Mammary epithelial cell (primary cell): ENCODE measurements at regions of chr6 and their contacts with region 1.

Region 1: DNA sequence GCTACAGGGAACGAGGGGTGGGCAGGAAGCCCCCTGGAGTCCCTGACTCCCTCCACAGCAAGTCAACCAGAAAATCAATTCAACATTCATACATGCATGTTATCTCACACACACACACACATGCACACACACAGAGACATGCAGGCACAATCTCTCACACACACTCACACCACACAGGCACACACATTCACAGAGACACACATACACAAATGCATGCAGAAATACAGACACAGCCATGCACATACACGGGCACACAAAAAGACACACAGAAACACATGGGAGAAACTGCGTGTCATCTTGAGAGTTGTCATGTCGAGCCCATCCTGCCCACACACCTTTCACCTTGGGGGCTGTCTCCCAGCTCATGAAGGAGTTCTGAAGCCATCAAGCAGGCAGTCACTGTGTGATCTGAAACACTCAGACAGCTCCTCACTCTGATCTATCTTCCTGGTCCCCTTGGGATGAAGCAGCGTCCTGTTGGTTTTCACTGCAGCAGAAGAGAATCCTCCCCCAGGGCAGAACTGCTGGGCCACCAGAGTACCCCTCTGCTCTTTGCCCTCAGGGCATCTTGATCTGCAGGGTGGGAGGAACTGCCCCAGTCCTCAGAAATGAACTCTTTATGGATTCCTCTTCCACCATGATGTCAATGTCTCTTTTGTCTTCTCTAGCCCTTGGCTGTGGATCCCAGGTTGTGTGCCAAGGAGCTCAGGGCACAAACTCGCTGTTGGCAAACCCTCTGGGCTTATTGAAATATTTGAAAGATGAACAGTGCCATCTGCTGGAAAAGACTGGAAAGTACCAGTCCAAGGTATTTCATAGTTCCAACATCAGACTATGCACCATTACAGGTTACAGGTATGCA is 8.8 kb downstream of the RAET1L start:
- DNase-seq: peak; percentile 56
- H3K4me3 ChIP-seq: no peak overlapping the region
- H3K27ac ChIP-seq: no peak overlapping the region
- H3K4me1 ChIP-seq: peaks cover 5% of the 10 kb centered on the region
- H3K27me3 ChIP-seq: peaks cover 2% of the 10 kb centered on the region
- CTCF ChIP-seq: peak; percentile 47 to 50

Region 2: DNA sequence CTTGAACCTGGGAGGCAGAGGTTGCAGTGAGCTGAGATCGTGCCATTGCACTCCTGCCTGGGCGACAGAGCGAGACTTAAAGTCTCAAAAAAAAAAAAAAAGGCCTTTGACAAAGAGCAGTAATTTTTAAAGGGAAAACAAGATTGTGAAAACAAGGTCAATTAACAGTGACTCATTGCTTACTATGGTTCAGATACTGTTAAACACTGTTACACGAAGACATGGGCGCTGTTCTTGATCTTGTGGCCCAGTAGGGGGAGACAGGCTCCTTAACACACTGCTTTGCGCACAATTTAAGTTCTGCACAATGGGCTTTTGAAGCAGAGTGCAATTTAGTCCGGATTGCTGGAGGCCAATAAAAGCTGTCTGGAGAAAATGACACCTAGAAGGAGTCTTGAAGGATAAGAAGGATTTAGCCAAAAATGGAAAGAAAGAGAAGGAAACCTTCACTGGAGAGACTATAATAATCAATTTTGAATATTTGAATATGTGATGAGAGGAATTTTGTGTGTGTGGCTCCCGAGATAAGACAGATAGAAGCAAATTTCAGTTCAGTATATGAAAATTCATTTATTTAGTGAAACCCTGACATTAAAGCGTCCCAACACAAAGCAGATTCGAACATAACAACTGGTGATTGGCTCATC is 292.7 kb before region 1 on chr6:
- CTCF ChIA-PET with region 1: no interaction called
- dilution Hi-C with region 1: no loop called
- in situ Hi-C with region 1: no loop called
- intact Hi-C with region 1: loop called (anchors 5 kb)
- DNase-seq: peak; percentile 74
- H3K4me3 ChIP-seq: no peak overlapping the region
- H3K27ac ChIP-seq: no peak overlapping the region
- H3K4me1 ChIP-seq: no peaks in the 10 kb centered on the region
- H3K27me3 ChIP-seq: no peaks in the 10 kb centered on the region
- CTCF ChIP-seq: peak; percentile 89 to 92

Region 3: GRCh38 chr6:149840345-149841075 is 176.0 kb before region 1 on chr6:
- CTCF ChIA-PET with region 1: no interaction called
- dilution Hi-C with region 1: no loop called
- in situ Hi-C with region 1: loop called in 1 of 2 experiments (anchors 25 kb)
- intact Hi-C with region 1: loop called (anchors 2 kb)
- DNase-seq: peak; percentile 70
- H3K4me3 ChIP-seq: no peak overlapping the region
- H3K27ac ChIP-seq: no peak overlapping the region
- H3K4me1 ChIP-seq: peaks cover 15% of the 10 kb centered on the region
- H3K27me3 ChIP-seq: no peaks in the 10 kb centered on the region
- CTCF ChIP-seq: peak; percentile 73 to 89

Region 4: GRCh38 chr6:149934249-149935156 is 82.1 kb before region 1 on chr6:
- CTCF ChIA-PET with region 1: interaction called, 3 read pairs
- dilution Hi-C with region 1: no loop called
- in situ Hi-C with region 1: no loop called
- intact Hi-C with region 1: loop called (anchors 2 kb)
- DNase-seq: peak; percentile 56
- H3K4me3 ChIP-seq: no peak overlapping the region
- H3K27ac ChIP-seq: no peak overlapping the region
- H3K4me1 ChIP-seq: peaks cover 11% of the 10 kb centered on the region
- H3K27me3 ChIP-seq: no peaks in the 10 kb centered on the region
- CTCF ChIP-seq: peak; percentile 67 to 70

Region 5: GRCh38 chr6:149941583-149942431 is 74.7 kb before region 1 on chr6 and contains the start of gene ULBP2:
- CTCF ChIA-PET with region 1: no interaction called
- dilution Hi-C with region 1: no loop called
- in situ Hi-C with region 1: loop called (anchors 5 kb)
- intact Hi-C with region 1: no loop called
- DNase-seq: peak; percentile 97
- H3K4me3 ChIP-seq: peak within 1 kb of the TSS; percentile 74 to 86 (median 86)
- H3K27ac ChIP-seq: peak within 1 kb of the TSS; percentile 60
- H3K4me1 ChIP-seq: peaks cover 16% of the 10 kb centered on the region
- H3K27me3 ChIP-seq: no peaks in the 10 kb centered on the region
- CTCF ChIP-seq: no peak
- total RNA-seq, gene ULBP2: 12.9 to 14.5 TPM

Region 6: DNA sequence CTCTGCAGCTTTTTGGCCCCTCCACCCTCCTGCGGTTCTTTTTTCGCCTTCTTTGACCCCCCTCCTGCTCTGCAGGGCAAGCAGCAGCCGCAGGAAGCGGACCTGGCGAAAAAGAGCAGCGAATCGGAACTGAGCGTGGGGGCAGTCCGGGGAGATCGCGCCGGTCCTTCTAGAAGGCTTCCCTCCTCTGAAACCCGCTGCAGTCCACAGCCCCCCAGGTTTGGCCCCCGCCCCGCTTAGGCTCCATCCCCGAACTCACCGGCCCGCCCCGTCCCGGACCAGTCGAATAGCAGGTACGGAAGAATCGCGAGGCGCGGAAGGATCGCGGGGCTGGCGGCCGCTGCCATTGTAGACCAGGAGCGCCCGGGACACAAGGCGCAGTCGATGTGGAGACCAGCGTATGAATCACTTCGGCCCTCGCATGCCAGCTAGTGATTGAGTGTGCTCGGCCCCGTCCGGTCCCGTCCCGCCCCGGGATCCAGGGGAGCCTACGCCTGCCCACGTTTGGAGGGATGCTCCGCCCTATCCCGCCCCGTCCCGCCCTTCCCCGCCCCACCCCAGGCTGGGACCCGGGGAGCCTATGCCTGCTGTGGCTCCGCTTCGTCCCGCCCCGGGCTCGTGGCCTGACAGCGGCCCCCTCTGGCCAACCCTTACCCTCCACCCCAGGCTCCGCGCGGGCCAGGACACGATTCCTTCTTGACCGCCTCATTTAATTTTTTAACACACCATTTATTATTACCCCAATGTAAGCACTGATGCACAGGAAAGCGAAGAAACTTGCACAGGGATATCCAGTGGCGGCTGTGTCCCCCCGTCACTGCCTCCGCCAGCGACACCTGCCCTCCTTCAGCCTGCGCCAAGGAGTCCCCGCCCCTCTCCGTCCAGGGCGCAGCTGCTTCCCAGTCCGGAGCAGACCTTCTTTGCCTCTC is 52.4 kb after region 1 on chr6 and contains the start of gene ULBP3:
- CTCF ChIA-PET with region 1: interaction called, 8 read pairs
- dilution Hi-C with region 1: no loop called
- in situ Hi-C with region 1: no loop called
- intact Hi-C with region 1: loop called (anchors 2 kb)
- DNase-seq: peak; percentile 98
- H3K4me3 ChIP-seq: peak within 1 kb of the TSS; percentile 63 to 88 (median 82)
- H3K27ac ChIP-seq: peak within 1 kb of the TSS; percentile 61
- H3K4me1 ChIP-seq: peaks cover 37% of the 10 kb centered on the region
- H3K27me3 ChIP-seq: no peaks in the 10 kb centered on the region
- CTCF ChIP-seq: peak; percentile 32 to 64
- total RNA-seq, gene ULBP3: 14.5 to 28.5 TPM

Region 7: GRCh38 chr6:150079604-150080003 is 63.0 kb after region 1 on chr6:
- CTCF ChIA-PET with region 1: no interaction called
- dilution Hi-C with region 1: no loop called
- in situ Hi-C with region 1: no loop called
- intact Hi-C with region 1: no loop called
- DNase-seq: no peak
- H3K4me3 ChIP-seq: no peak overlapping the region
- H3K27ac ChIP-seq: no peak overlapping the region
- H3K4me1 ChIP-seq: peaks cover 8% of the 10 kb centered on the region
- H3K27me3 ChIP-seq: no peaks in the 10 kb centered on the region
- CTCF ChIP-seq: no peak

Region 8: DNA sequence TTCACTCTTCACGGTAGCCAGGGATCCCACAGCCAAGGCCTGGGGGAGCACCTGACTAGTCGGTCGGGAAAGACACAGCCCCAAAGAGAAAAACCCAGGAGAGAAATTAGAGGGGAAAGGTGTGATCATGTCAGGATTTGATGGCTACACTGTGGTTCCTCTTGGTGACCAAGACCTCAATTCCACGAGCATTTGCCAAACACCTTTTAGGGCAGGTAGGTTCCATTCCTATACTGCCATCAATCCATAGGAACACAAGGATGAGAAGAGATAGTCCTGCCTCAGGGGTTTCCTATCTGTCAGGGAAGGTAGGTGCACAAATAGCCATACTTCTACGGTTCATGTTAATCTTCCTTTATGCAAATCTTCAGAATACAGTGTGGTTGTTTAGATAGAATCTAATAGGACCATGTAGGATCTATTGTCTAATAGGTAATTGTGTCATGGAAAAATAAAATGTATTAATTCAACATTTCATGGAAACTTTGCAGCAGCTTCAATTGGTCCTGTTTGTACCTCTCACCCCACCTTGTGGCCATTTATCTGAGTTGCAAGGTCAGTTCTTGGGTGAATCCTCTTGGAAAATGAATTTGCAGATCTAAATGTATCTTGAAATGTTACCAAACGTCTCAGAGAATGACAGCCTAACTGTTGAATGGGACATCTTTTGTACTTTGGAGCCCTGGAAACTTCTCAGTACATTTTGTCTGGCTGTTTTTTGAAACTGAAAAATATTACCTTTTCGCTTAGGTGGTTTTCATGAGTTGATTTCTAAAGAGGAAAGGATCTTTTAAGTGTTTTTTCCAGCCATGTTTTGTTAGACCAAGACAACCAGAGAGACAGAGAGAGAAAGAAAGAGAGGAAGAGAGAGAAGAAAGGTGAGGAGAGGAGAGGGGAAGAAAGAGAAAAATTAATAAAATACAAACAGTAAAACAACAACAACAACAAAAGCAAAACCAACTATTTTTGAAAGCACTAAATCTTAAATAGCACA is 318.5 kb after region 1 on chr6:
- CTCF ChIA-PET with region 1: no interaction called
- dilution Hi-C with region 1: no loop called
- in situ Hi-C with region 1: no loop called
- intact Hi-C with region 1: no loop called
- DNase-seq: peak; percentile 67
- H3K4me3 ChIP-seq: no peak overlapping the region
- H3K27ac ChIP-seq: peak overlapping the region; percentile 59
- H3K4me1 ChIP-seq: peaks cover 26% of the 10 kb centered on the region
- H3K27me3 ChIP-seq: no peaks in the 10 kb centered on the region
- CTCF ChIP-seq: peak; percentile 82 to 88